ENCODE measurements at regions of chr2 and their contacts with region 1.

Region 1: GRCh38 chr2:27771548-27772335 is at the start of gene MRPL33:
- DNase-seq: peak; percentile 97 to 98
- ATAC-seq: peak; percentile 96 to 99 (median 97)
- H3K4me3 ChIP-seq: peak within 1 kb of the TSS; percentile 93
- H3K27ac ChIP-seq: peak within 1 kb of the TSS; percentile 97
- H3K4me1 ChIP-seq: peaks cover 44% of the 10 kb centered on the region
- H3K27me3 ChIP-seq: no peaks in the 10 kb centered on the region
- CTCF ChIP-seq: no peak
- total RNA-seq, gene MRPL33: 200 to 269 (median 257) TPM

Region 2: GRCh38 chr2:27723372-27724144 is 48.2 kb before region 1 on chr2:
- intact Hi-C with region 1: loop called in 1 of 2 experiments (anchors 5 kb)
- DNase-seq: peak; percentile 58 to 72
- ATAC-seq: peak; percentile 66 to 79 (median 71)
- H3K4me3 ChIP-seq: no peak overlapping the region
- H3K27ac ChIP-seq: peak overlapping the region; percentile 51
- H3K4me1 ChIP-seq: peaks cover 6% of the 10 kb centered on the region
- H3K27me3 ChIP-seq: no peaks in the 10 kb centered on the region
- CTCF ChIP-seq: peak; percentile 75

Region 3: GRCh38 chr2:27798948-27799645 is 27.4 kb after region 1 on chr2:
- intact Hi-C with region 1: no loop called
- DNase-seq: peak in 1 of 2 donors; percentile 72
- ATAC-seq: peak; percentile 39 to 81 (median 68)
- H3K4me3 ChIP-seq: no peak overlapping the region
- H3K27ac ChIP-seq: peak overlapping the region; percentile 85
- H3K4me1 ChIP-seq: peaks cover 58% of the 10 kb centered on the region
- H3K27me3 ChIP-seq: no peaks in the 10 kb centered on the region
- CTCF ChIP-seq: no peak

Region 4: DNA sequence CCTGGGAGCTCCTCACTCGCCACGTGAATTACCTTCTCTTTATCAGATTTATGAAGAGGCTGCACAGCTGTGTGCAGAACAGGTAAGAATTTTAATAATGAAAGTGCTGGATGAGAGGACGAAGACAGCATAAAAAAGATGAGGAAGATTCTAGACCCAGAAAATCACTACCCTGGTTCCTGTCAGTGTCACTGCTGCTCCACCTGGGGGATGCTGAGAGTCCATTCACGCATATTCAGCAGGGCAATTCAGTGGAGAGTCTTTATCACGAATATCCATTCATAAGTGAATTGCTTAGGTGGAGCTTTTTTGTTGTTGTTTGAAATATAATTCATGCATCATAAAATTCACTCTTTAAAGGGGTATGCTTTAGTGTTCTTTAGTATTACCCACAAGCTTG is 51.8 kb after region 1 on chr2:
- intact Hi-C with region 1: loop called in 1 of 2 experiments (anchors 5 kb)
- DNase-seq: no peak
- ATAC-seq: peak; percentile 63 to 77 (median 72)
- H3K4me3 ChIP-seq: peak overlapping the region; percentile 42
- H3K27ac ChIP-seq: peak overlapping the region; percentile 74
- H3K4me1 ChIP-seq: peaks cover 14% of the 10 kb centered on the region
- H3K27me3 ChIP-seq: no peaks in the 10 kb centered on the region
- CTCF ChIP-seq: peak; percentile 44